ENCODE measurements at regions of chr1 and their contacts with region 1.

Region 1: DNA sequence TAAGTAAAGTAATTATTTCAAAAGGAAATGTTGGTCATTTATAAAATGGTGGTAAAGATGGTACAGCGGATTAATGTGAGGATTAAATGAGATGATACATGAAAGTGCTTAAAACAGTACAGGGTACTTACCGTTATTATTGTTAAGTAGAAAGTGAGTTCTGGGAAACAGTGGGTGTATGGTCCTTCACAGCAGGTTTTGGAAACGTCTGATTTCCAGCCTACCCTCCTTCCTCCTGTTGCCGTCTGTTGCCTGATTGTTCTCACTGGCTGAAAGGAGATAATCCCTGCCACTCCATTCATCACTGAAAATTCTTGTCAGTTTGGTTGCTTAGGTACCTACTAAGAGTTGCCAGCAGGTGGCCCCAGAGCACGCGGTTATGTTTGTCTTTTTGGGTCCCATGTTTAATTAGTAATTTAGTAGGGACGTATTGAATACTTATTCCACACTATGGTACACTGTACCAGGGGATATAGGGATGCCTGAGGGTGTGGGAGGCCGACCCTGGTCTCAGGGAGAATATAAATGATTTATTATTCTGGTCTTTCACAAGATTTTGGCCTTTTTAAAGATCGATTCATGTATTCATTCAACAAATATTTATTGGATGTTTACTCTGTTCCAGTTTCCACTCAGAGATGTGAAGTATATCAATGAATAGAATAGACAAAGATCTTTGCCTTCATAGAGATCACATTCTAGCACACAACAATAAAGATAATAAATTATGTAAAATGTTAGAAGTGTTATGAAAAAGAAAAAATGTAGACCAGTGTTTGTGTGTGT is 30.8 kb upstream of the RPTN start:
- DNase-seq: peak; percentile 65 to 70
- H3K4me3 ChIP-seq: no peak overlapping the region
- H3K4me3 Mint-ChIP-seq: peak overlapping the region; percentile 63
- H3K27ac Mint-ChIP-seq: no peak overlapping the region
- H3K4me1 ChIP-seq: no peaks in the 10 kb centered on the region
- H3K4me1 Mint-ChIP-seq: no peaks in the 10 kb centered on the region
- H3K27me3 ChIP-seq: peaks cover 1% of the 10 kb centered on the region; the same call in 1 of the 2 replicates
- H3K27me3 Mint-ChIP-seq: peaks cover 7% of the 10 kb centered on the region
- CTCF ChIP-seq: peak; percentile 81 to 84

Region 2: DNA sequence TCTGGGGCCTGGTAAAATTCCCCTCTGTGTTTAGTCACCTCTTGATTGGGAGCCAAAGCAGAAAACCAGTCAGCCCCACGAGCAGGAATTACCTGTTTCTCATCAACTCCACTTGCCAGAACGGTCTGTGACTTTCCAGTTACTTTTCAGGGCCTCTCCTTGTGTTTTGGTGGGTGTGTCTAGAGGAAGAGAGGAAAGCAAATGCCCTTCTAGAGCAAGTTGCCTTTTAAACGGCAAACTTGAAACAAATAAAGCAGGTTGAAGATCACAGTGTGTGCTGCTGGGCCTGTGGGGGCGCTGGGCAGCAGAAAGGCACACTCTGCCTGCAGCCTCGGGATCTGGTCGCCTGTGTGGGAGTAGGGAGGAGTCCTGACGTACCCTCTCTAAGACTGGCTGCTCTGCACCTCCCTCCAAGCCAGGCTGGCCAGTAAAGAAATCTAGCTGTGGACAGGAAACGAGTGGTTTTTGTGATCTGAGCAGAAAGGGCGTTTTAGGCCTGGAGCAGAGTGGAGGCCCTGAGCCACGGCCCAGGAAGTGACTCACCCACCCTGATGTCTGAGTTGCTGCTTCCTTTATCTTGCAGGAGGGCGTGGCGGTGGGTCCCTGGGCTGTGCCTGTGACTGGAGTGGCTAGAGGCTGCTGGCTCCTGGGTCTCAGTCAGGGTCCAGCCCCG is 142.0 kb before region 1 on chr1:
- CTCF ChIA-PET with region 1: interaction called, 4 read pairs
- POLR2A ChIA-PET with region 1: no interaction called
- intact Hi-C with region 1: loop called (anchors 1 kb)
- DNase-seq: peak; percentile 92 to 95
- H3K4me3 ChIP-seq: peak overlapping the region; percentile 25
- H3K4me3 Mint-ChIP-seq: peak overlapping the region; percentile 72
- H3K27ac Mint-ChIP-seq: peak overlapping the region; percentile 96
- H3K4me1 ChIP-seq: peaks cover 14% of the 10 kb centered on the region
- H3K4me1 Mint-ChIP-seq: peaks cover 21% of the 10 kb centered on the region
- H3K27me3 ChIP-seq: no peaks in the 10 kb centered on the region
- H3K27me3 Mint-ChIP-seq: peaks cover 2% of the 10 kb centered on the region
- CTCF ChIP-seq: peak; percentile 63 to 80

Region 3: GRCh38 chr1:152141974-152142584 is 47.8 kb before region 1 on chr1:
- CTCF ChIA-PET with region 1: interaction called, 15 read pairs
- POLR2A ChIA-PET with region 1: no interaction called
- intact Hi-C with region 1: loop called (anchors 1 kb)
- DNase-seq: peak; percentile 61 to 70
- H3K4me3 ChIP-seq: no peak overlapping the region
- H3K4me3 Mint-ChIP-seq: no peak overlapping the region
- H3K27ac Mint-ChIP-seq: no peak overlapping the region
- H3K4me1 ChIP-seq: no peaks in the 10 kb centered on the region
- H3K4me1 Mint-ChIP-seq: no peaks in the 10 kb centered on the region
- H3K27me3 ChIP-seq: no peaks in the 10 kb centered on the region
- H3K27me3 Mint-ChIP-seq: peaks cover 5% of the 10 kb centered on the region
- CTCF ChIP-seq: peak; percentile 81 to 89

Region 4: DNA sequence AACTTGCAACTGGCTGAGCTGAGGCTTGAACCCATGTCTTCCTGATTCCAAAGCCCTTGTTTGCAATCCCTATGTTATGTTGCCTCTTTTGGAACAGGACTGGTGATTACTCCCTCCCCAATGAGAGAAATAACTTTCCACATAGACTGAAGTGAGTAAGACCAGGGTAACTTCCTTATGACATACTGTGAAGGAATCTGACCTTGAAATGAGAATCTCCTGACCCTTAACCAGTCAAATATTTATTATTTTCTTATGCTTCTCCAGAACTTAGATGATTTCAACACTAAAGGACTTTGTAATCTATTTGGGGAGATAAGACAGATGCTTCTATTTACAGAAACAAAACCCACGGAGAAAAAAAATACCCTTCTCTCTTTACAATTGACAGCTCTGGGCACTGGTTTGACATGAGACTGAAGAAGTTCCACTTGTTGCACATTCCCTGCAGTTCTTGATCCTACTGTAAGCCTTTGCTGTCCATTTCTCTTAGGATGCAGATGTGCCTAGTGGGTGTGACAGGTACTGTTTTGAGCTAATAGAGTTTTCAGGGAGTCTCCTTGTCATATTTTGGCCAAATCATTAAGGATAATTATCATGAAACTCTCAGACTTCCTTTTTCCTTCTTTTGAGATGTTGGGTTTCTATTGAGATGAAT is 26.9 kb before region 1 on chr1:
- CTCF ChIA-PET with region 1: no interaction called
- POLR2A ChIA-PET with region 1: no interaction called
- intact Hi-C with region 1: loop called (anchors 1 kb)
- DNase-seq: peak in 1 of 2 experiments; percentile 66
- H3K4me3 ChIP-seq: no peak overlapping the region
- H3K4me3 Mint-ChIP-seq: no peak overlapping the region
- H3K27ac Mint-ChIP-seq: no peak overlapping the region
- H3K4me1 ChIP-seq: peaks cover 38% of the 10 kb centered on the region
- H3K4me1 Mint-ChIP-seq: peaks cover 41% of the 10 kb centered on the region
- H3K27me3 ChIP-seq: no peaks in the 10 kb centered on the region
- H3K27me3 Mint-ChIP-seq: no peaks in the 10 kb centered on the region
- CTCF ChIP-seq: peak in 1 of 2 experiments; percentile 15

Region 5: GRCh38 chr1:152227310-152227928 is 37.6 kb after region 1 on chr1:
- CTCF ChIA-PET with region 1: no interaction called
- POLR2A ChIA-PET with region 1: no interaction called
- intact Hi-C with region 1: loop called (anchors 1 kb)
- DNase-seq: peak in 1 of 2 experiments; percentile 20
- H3K4me3 ChIP-seq: no peak overlapping the region
- H3K4me3 Mint-ChIP-seq: no peak overlapping the region
- H3K27ac Mint-ChIP-seq: no peak overlapping the region
- H3K4me1 ChIP-seq: no peaks in the 10 kb centered on the region
- H3K4me1 Mint-ChIP-seq: no peaks in the 10 kb centered on the region
- H3K27me3 ChIP-seq: no peaks in the 10 kb centered on the region
- H3K27me3 Mint-ChIP-seq: peaks cover 6% of the 10 kb centered on the region
- CTCF ChIP-seq: peak in 1 of 2 experiments; percentile 29

Region 6: DNA sequence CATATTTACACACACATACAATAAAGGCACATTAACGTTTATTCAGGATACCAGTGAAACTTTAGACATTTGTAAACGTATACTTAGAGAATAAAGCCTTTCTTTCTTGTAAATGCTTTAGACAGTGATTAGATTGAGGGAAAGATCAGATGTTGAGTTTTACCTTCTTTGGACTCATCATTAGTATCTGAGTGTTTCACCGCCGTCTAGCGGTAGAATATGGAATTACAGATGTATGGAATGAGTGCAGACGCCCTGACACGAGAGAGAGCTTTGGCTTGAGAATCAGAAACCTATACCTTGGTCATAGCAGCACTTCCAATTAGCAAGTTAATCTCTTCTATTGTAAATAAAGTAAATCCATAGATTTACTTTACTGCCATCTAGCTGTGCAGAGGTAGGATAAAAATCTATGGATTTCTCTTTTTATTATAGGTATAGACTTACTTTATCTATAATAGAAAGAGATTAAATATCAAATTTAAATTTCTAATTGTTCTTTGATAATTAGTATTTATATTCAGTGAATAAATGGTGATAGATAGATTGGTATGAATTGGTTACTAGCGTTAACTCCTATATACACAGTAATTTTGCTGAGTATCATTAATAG is 157.4 kb after region 1 on chr1:
- CTCF ChIA-PET with region 1: interaction called, 3 read pairs
- POLR2A ChIA-PET with region 1: no interaction called
- intact Hi-C with region 1: loop called (anchors 2 kb)
- DNase-seq: peak; percentile 42 to 72
- H3K4me3 ChIP-seq: no peak overlapping the region
- H3K4me3 Mint-ChIP-seq: no peak overlapping the region
- H3K27ac Mint-ChIP-seq: no peak overlapping the region
- H3K4me1 ChIP-seq: no peaks in the 10 kb centered on the region
- H3K4me1 Mint-ChIP-seq: no peaks in the 10 kb centered on the region
- H3K27me3 ChIP-seq: no peaks in the 10 kb centered on the region
- H3K27me3 Mint-ChIP-seq: peaks cover 5% of the 10 kb centered on the region
- CTCF ChIP-seq: peak; percentile 79 to 82

Region 7: GRCh38 chr1:152440635-152441471 is 251.0 kb after region 1 on chr1:
- CTCF ChIA-PET with region 1: no interaction called
- POLR2A ChIA-PET with region 1: no interaction called
- intact Hi-C with region 1: loop called (anchors 1 kb)
- DNase-seq: peak; percentile 75 to 76
- H3K4me3 ChIP-seq: no peak overlapping the region
- H3K4me3 Mint-ChIP-seq: no peak overlapping the region
- H3K27ac Mint-ChIP-seq: no peak overlapping the region
- H3K4me1 ChIP-seq: no peaks in the 10 kb centered on the region
- H3K4me1 Mint-ChIP-seq: no peaks in the 10 kb centered on the region
- H3K27me3 ChIP-seq: no peaks in the 10 kb centered on the region
- H3K27me3 Mint-ChIP-seq: peaks cover 25% of the 10 kb centered on the region
- CTCF ChIP-seq: peak; percentile 68 to 81